ENCODE measurements at regions of chr19 and their contacts with region 1.

Region 1: DNA sequence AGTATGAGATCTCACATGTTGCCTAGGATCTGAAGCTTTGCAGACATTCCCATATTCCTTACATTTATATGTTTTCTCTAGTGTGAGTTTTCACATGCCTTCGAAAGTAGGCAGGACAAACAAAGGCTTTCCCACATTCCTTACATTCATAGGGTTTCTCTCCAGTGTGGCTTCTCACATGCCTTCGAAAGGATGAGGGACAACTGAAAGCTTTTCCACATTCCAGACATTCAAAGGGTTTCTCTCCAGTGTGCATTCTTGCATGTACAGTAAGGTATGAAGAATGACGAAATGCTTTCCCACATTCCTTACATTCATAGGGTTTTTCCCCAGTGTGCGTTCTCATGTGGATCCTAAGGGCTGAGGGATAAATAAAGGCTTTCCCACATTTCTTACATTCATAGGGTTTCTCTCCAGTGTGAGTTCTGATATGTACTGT is 14.2 kb downstream of the ZNF699 start:
- DNase-seq: no peak
- H3K4me3 ChIP-seq: no peak overlapping the region
- H3K27ac ChIP-seq: no peak overlapping the region
- H3K4me1 ChIP-seq: no peaks in the 10 kb centered on the region
- H3K27me3 ChIP-seq: no peaks in the 10 kb centered on the region
- CTCF ChIP-seq: no peak
- EP300 ChIP-seq: no peak
- POLR2A ChIP-seq: no peak

Region 2: DNA sequence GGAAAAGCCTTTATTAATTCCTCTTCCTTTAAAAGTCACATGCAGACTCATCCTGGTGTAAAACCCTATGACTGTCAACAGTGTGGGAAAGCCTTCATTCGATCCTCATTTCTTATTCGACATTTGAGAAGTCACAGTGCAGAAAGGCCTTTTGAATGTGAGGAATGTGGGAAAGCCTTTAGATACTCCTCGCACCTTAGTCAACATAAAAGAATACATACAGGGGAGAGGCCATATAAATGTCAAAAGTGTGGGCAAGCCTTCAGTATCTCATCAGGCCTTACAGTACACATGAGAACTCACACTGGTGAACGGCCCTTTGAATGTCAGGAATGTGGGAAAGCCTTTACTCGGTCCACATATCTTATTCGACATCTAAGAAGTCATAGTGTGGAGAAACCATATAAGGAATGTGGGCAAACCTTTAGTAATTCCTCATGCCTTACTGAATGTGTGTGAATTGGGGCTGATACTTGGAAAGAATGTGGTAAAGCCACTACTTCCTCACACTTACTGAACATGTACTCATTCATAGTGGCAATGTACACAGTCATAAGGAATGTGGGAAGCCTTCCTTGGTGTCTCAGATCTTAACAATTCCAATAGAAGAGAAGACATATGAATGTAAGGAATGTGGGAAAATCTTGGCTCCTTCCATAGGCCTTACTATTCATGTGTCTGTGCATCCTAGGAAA is 47.3 kb after region 1 on chr19:
- in situ Hi-C with region 1: no loop called
- intact Hi-C with region 1: loop called (anchors 1 kb)
- DNase-seq: no peak
- H3K4me3 ChIP-seq: no peak overlapping the region
- H3K27ac ChIP-seq: no peak overlapping the region
- H3K4me1 ChIP-seq: no peaks in the 10 kb centered on the region
- H3K27me3 ChIP-seq: no peaks in the 10 kb centered on the region
- CTCF ChIP-seq: no peak
- EP300 ChIP-seq: no peak
- POLR2A ChIP-seq: no peak

Region 3: GRCh38 chr19:9362905-9363304 is 67.5 kb after region 1 on chr19 and contains the start of gene ZNF177:
- in situ Hi-C with region 1: no loop called
- intact Hi-C with region 1: no loop called
- DNase-seq: no peak
- H3K4me3 ChIP-seq: no peak within 1 kb of the TSS
- H3K27ac ChIP-seq: no peak within 1 kb of the TSS
- H3K4me1 ChIP-seq: no peaks in the 10 kb centered on the region
- H3K27me3 ChIP-seq: no peaks in the 10 kb centered on the region
- CTCF ChIP-seq: no peak
- EP300 ChIP-seq: no peak
- POLR2A ChIP-seq: no peak
- total RNA-seq, gene ZNF177: 1.8 to 4.2 (median 2.1) TPM in 3 of 4 donors, not detected in the other

Region 4: DNA sequence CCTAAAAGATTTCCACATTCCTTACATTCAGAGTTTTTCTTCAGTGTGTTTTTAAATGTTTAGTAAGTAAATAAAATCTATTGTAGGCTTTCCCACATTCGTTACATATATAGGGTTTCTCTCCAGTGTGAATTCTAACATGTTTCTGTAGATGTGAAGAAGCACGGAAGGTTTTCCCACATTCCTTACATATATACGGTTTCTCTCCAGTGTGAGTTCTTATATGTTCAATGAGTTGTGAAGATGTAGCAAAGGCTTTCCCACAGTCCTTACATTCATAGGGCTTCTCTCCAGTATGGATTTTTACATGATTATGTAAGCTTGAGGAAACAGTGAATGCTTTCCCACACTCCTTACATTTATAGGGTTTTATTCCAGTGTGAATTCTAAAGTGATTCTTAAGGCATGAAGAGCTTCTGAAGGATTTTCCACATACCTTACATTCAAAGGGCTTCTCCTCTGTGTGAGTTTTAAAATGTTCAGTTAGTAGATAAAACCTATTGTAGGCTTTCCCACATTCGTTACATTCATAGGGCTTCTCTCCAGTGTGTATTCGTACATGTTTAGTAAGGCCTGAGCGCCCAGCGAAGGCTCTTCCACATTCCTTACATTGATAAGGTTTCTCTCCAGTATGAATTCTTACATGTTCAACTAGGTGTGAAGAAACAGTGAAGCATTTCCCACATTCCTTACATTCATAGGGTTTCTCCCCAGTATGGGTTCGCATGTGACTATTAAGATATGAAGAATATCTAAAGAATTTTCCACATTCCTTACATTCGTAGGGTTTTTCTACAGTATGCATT is 270.7 kb after region 1 on chr19:
- in situ Hi-C with region 1: no loop called
- intact Hi-C with region 1: no loop called
- DNase-seq: no peak
- H3K4me3 ChIP-seq: no peak overlapping the region
- H3K27ac ChIP-seq: no peak overlapping the region
- H3K4me1 ChIP-seq: no peaks in the 10 kb centered on the region
- H3K27me3 ChIP-seq: no peaks in the 10 kb centered on the region
- CTCF ChIP-seq: no peak
- EP300 ChIP-seq: no peak
- POLR2A ChIP-seq: no peak

Region 5: GRCh38 chr19:9658769-9659168 is 363.3 kb after region 1 on chr19:
- in situ Hi-C with region 1: no loop called
- intact Hi-C with region 1: no loop called
- DNase-seq: no peak
- H3K4me3 ChIP-seq: no peak overlapping the region
- H3K27ac ChIP-seq: no peak overlapping the region
- H3K4me1 ChIP-seq: no peaks in the 10 kb centered on the region
- H3K27me3 ChIP-seq: no peaks in the 10 kb centered on the region
- CTCF ChIP-seq: no peak
- EP300 ChIP-seq: no peak
- POLR2A ChIP-seq: no peak

Region 6: DNA sequence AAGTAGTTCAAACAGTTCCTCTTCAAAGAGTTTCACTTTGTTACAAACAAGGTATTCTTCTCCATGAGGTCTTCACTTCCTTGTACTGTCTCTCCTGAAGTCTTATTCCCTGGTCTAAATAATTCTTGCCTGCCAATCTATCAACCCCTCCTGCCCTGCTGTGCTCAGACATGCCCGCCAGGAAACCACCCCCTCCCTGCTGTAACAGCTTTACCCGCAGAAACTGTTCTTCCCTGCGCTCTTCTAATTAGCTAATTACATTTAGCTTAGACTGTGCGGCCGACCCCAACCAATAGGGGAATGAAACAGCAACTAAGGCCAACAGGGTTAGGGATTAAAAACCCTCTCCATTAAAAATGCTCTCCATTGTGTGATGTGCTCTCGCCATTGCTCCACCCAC is 426.4 kb after region 1 on chr19:
- in situ Hi-C with region 1: no loop called
- intact Hi-C with region 1: no loop called
- DNase-seq: no peak
- H3K4me3 ChIP-seq: no peak overlapping the region
- H3K27ac ChIP-seq: no peak overlapping the region
- H3K4me1 ChIP-seq: no peaks in the 10 kb centered on the region
- H3K27me3 ChIP-seq: no peaks in the 10 kb centered on the region
- CTCF ChIP-seq: no peak
- EP300 ChIP-seq: no peak
- POLR2A ChIP-seq: no peak